HCT116 (cell line): ENCODE measurements at regions of chr1 and their contacts with region 1.

Region 1: GRCh38 chr1:117235863-117236465 is 25.2 kb upstream of the VTCN1 start:
- DNase-seq: no peak
- ATAC-seq: no peak
- H3K4me3 ChIP-seq: no peak overlapping the region
- H3K27ac ChIP-seq: no peak overlapping the region
- H3K4me1 ChIP-seq: no peaks in the 10 kb centered on the region
- H3K27me3 ChIP-seq: no peaks in the 10 kb centered on the region
- CTCF ChIP-seq: no peak
- POLR2A ChIP-seq: no peak
- RAD21 ChIP-seq: no peak

Region 2: DNA sequence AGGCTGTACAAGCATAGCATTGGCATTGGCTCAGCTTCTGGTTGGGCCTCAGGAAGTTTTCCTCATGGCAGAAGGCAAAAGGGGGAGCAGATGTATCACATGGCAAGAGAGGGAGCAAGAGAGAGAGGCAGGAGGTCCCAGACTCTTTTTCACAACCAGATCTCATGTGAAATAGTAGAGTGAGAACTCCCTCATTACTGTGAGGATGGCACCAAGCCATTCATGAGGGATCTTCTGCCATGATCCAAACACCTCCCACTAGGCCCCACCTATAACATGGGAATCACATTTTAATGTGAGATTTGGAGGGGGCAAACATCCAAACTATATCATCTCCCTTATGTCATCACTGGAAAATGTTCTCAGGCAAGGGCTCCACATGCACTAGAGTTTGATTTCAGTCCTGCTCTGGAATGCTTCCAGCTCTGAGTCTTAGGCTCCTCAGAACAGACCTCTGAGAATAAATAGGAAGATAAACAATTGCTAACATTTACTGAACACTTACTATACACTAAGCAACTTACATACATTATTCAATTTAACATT is 14.2 kb after region 1 on chr1:
- CTCF ChIA-PET with region 1: no interaction called
- POLR2A ChIA-PET with region 1: interaction called, 3 read pairs
- RAD21 ChIA-PET with region 1: no interaction called
- intact Hi-C with region 1: loop called (anchors 2 kb)
- DNase-seq: no peak
- ATAC-seq: no peak
- H3K4me3 ChIP-seq: no peak overlapping the region
- H3K27ac ChIP-seq: no peak overlapping the region
- H3K4me1 ChIP-seq: no peaks in the 10 kb centered on the region
- H3K27me3 ChIP-seq: no peaks in the 10 kb centered on the region; the same call in 1 of the 2 replicates
- CTCF ChIP-seq: no peak
- POLR2A ChIP-seq: no peak
- RAD21 ChIP-seq: no peak